ENCODE measurements at regions of chr6 and their contacts with region 1.

Region 1: DNA sequence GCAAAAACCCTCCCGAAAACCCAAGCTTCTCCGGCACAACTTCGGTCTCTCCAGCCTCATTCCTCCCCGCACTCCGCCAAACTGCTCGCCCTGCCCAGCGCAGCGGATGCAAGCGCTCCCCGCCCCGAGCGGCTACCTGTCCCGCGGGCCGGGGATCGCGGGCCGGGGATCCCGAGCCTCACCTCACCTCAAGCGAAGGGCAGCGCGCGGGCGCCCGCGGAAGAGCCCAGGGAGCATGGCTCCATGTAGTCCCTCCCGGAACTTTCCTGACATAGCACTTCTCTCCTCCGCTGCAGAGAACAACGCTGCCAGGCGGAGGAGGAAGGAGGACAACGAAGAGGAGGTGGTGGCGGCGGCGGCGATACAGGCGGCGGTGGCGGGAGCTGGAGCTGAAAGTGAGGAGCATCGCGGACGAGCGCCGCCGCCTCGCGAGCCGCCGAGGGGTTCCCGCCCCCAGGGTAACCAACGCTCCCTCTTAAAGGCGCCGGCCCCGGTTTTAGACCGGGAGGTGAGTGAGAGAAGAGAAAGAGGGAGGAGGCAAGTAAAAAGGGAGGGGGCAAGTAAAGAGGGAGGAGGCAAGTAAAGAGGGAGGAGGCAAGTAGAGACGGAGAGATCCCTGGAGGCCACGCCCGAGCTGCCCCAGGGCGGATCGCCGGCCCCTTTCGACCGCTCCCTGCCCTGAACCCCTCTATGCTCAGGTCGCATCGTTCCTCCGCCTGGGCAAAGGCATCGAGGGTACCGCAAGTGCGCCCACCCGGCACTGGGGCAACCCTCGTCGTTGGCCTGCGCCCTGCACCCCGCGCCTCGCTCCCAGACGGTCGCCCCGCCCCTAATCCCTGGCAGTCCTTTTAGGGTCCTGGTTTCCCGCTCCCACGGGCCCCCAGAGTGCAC is at the start of gene GPR63:
- DNase-seq: peak; percentile 75
- H3K4me3 Mint-ChIP-seq: peak within 1 kb of the TSS; percentile 82
- H3K27ac Mint-ChIP-seq: no peak within 1 kb of the TSS
- H3K4me1 Mint-ChIP-seq: peaks cover 10% of the 10 kb centered on the region
- H3K27me3 Mint-ChIP-seq: peaks cover 54% of the 10 kb centered on the region
- total RNA-seq, gene GPR63: 0.72 to 0.81 TPM

Region 2: DNA sequence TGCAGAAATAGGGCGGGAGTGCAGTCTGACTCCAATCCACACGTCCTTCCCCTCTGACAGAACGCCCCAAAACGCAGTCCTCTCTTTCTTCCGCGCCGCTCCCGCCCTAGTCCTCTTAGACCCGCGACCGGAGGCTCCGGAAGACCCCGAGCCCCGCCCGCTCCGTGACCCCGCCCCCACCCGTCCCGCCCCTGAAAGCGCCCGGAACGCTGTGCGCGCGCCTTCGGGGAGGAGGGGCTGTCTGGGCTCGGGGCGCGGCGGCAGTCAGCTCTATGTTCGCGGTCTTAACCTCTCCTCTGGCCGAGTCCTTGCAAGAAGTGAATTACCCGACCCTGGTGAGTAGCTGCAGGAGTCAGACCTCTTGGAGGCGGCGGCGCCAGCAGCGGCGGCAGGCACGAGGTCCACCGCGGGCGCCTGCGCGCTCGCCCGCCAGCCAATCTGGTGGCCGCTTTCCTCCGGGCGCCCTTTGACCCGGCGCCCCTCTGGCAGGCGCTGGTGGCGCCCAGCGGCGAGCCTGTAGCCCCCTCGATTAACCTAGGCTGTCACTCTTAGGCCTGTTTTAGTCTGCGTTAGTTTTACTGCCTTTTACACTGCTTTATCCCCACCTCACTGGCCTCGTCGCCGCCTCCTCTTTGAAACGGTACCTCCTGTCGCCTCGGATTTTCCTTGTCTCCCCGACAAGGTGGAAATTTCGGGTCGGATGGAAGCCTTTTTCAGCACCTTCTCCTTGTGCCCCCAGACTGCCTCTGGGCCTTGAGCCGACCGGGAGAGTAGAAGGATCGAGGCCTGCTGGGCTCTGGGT is 1259.8 kb before region 1 on chr6 and contains the start of gene MANEA:
- CTCF ChIA-PET with region 1: no interaction called
- intact Hi-C with region 1: loop called (anchors 2 kb)
- DNase-seq: peak; percentile 80
- H3K4me3 Mint-ChIP-seq: peak within 1 kb of the TSS; percentile 96
- H3K27ac Mint-ChIP-seq: peak within 1 kb of the TSS; percentile 98
- H3K4me1 Mint-ChIP-seq: peaks cover 36% of the 10 kb centered on the region
- H3K27me3 Mint-ChIP-seq: no peaks in the 10 kb centered on the region
- total RNA-seq, gene MANEA: 14.0 to 16.0 TPM

Region 3: GRCh38 chr6:96521644-96522464 is 315.5 kb before region 1 on chr6 and contains the start of gene UFL1:
- CTCF ChIA-PET with region 1: no interaction called
- intact Hi-C with region 1: loop called (anchors 1 kb)
- DNase-seq: peak; percentile 92
- H3K4me3 Mint-ChIP-seq: peak within 1 kb of the TSS; percentile 98
- H3K27ac Mint-ChIP-seq: peak within 1 kb of the TSS; percentile 99
- H3K4me1 Mint-ChIP-seq: peaks cover 13% of the 10 kb centered on the region
- H3K27me3 Mint-ChIP-seq: no peaks in the 10 kb centered on the region
- total RNA-seq, gene UFL1: 28.3 to 28.7 TPM

Region 4: GRCh38 chr6:96889146-96889545 is 51.8 kb after region 1 on chr6:
- CTCF ChIA-PET with region 1: no interaction called
- intact Hi-C with region 1: loop called (anchors 2 kb)
- DNase-seq: no peak
- H3K4me3 Mint-ChIP-seq: no peak overlapping the region
- H3K27ac Mint-ChIP-seq: no peak overlapping the region
- H3K4me1 Mint-ChIP-seq: peaks cover 6% of the 10 kb centered on the region
- H3K27me3 Mint-ChIP-seq: no peaks in the 10 kb centered on the region

Region 5: DNA sequence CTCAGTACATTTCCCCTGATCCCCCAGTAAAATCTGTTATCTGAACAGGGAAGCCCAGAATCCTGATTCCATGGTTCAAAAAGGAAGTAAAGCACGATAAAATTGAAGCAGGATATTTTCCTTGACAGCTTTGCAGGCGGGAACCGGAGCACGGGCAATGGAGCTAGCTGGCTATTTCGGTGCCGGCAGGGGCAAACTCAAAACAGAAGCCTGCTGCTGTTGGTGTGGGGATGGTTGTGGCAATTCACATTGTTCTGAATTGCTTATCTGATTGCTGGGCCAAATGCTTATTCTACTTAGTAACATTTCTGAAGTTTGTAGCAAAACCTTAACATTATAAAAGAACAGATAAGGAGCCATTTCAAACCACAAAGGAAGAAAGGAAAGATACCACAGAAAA is 273.3 kb after region 1 on chr6:
- CTCF ChIA-PET with region 1: no interaction called
- intact Hi-C with region 1: no loop called
- DNase-seq: no peak
- H3K4me3 Mint-ChIP-seq: no peak overlapping the region
- H3K27ac Mint-ChIP-seq: no peak overlapping the region
- H3K4me1 Mint-ChIP-seq: peaks cover 15% of the 10 kb centered on the region
- H3K27me3 Mint-ChIP-seq: no peaks in the 10 kb centered on the region